Activated T-helper 1 cell treated with anti-CD3 and anti-CD28 coated beads, Interleukin-12 subunit alpha, Interleukin-12 subunit beta, Interleukin-2, Interleukin-4 antibody, amounts not matched to agents 30 ng/mL and 10 ng/mL and 1 ng/mL, durations not matched to agents 14 hours and 24 hours and 36 hours (primary cell): ENCODE measurements at regions of chr17 and their contacts with region 1.

Region 1: DNA sequence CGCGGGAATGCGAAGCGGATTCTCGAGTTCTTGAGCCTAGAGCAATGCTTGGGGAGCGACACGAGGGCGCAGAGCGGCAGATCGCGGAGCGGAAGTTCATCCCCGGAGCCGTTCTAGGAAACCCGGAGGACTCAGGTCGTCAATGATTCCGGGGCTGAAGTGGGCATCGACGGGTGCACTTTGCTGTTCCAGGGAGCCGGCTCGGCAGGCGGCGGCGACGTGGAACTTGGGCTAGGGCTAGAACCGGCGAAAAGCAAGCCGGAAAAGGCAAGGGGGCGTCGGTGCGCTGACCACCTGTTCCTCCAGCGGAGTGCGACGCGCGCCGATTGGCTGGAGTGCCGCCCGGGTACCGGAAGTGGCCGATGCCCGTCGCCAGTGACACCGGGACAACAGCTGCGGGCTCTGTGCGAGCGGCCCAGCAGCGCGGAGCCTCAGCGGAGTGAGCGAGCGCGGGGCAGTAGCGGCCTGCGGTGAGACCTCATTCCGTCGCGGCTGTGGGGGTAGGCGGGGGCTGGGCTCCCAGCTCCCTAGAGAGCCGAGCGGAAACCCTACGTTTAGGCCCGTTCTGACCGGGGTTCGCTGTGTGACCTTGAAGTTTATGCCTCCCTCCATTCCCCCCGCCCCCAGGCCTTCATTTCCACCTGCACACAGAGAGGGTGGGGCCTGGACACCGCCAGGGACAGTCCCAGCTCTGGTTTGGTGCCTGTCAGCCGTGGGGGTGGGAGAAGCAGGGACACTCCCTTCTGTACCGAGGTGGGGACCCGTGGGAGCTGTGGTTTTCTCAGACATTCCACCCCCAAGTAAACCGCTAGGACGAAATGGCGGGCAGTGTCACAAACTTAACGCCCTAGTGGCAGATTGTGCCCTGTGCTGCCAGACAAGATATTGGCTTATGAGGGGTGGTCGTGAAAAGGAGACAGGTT is at the start of gene ZFP3:
- DNase-seq: peak; percentile 72
- H3K4me3 Mint-ChIP-seq: peak within 1 kb of the TSS; percentile 81
- H3K27ac Mint-ChIP-seq: peak within 1 kb of the TSS; percentile 86
- H3K4me1 Mint-ChIP-seq: peaks cover 17% of the 10 kb centered on the region
- H3K27me3 Mint-ChIP-seq: peaks cover 2% of the 10 kb centered on the region
- total RNA-seq, gene ZFP3: 1.9 and 2.0 TPM in 2 replicates

Region 2: GRCh38 chr17:4815043-4815675 is 263.2 kb before region 1 on chr17:
- intact Hi-C with region 1: no loop called
- DNase-seq: no peak
- H3K4me3 Mint-ChIP-seq: no peak overlapping the region
- H3K27ac Mint-ChIP-seq: no peak overlapping the region
- H3K4me1 Mint-ChIP-seq: peaks cover 5% of the 10 kb centered on the region
- H3K27me3 Mint-ChIP-seq: no peaks in the 10 kb centered on the region

Region 3: DNA sequence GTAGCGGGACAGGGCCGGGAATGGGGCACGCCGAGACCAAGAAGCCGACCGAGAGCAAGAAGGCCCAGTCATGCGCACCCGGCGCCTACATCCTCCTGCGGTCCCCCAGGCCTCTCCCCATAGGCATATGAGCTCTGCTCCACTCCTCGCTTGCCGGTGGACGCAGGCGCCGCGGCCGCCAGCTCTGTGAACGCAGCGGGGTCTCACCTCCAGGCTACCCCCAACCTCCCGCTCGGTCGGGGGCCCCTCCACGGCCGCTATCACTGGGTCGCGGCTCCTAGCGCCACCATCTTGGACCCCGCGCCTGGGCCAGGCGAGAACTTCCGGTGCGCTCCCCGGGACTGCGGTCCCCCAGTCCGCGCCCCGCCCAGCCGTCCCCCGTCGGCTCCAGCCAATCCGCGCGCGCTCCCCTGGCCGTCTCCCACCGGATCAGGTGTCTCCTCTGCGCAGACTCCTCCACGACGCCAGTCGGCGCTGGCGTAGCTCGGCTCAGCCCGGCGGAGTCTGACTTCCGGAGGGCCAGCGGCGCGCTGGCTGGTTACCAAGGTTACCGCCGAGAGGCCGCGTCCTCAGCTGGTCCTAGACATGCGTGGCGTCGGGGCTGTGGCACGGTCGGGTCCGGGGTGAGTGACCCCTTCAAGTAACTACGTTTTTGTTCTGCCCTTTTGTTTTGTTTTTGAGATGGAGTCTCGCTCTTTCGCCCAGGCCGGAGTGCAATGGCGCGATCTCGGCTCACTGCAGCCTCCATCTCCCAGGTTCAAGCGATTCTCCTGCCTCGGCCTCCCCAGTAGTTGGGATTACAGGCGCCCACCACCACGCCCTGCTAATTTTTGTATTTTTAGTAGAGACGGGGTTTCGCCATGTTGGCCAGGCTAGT is 113.4 kb after region 1 on chr17 and contains the start of gene ZNF594:
- intact Hi-C with region 1: loop called (anchors 1 kb)
- DNase-seq: peak; percentile 95
- H3K4me3 Mint-ChIP-seq: peak within 1 kb of the TSS; percentile 93
- H3K27ac Mint-ChIP-seq: peak within 1 kb of the TSS; percentile 81
- H3K4me1 Mint-ChIP-seq: peaks cover 20% of the 10 kb centered on the region
- H3K27me3 Mint-ChIP-seq: peaks cover 2% of the 10 kb centered on the region
- total RNA-seq, gene ZNF594: 8.5 and 8.8 TPM in 2 replicates